ENCODE measurements at regions of chr1 and their contacts with region 1.

Region 1: DNA sequence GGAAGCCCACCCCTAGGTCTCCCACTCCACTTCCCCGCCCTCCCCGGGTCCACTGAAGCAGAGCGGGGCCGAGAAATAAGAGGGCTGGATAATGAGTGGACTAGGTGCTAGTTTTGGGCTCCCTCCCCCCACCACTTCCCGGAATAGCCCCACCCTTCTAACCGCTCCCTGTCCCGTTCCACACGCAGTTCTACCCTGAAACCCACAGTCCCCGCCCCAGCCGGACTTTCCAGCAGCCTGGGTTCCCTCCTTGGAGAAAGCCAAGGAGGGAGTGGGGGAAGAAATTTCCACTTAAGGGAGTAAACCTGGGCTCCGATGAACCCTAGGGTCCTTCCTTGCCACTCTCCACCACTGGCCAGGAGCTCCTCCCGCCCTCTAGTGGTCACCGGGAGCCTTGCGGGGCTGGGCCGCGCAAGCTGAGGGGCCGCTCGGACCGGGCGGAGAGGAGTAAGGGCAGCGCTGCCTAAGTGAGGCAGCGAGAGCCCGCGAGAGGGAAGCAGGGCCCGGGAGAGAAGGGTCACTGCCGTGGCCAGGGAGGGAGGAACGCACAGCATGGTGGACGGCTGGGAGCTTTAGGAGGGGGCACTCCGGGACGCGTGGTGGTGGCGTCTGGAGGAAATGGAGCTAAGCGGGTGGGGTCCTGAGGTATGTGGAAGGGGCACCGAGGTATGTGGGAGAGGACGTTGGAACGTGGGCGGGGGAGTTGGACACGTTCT is 14.3 kb downstream of the THBS3 start:
- DNase-seq: peak; percentile 82
- ATAC-seq: peak; percentile 49
- H3K4me3 Mint-ChIP-seq: peak overlapping the region; percentile 84
- H3K27ac Mint-ChIP-seq: peak overlapping the region; percentile 98
- H3K4me1 Mint-ChIP-seq: peaks cover 40% of the 10 kb centered on the region
- H3K27me3 Mint-ChIP-seq: no peaks in the 10 kb centered on the region

Region 2: DNA sequence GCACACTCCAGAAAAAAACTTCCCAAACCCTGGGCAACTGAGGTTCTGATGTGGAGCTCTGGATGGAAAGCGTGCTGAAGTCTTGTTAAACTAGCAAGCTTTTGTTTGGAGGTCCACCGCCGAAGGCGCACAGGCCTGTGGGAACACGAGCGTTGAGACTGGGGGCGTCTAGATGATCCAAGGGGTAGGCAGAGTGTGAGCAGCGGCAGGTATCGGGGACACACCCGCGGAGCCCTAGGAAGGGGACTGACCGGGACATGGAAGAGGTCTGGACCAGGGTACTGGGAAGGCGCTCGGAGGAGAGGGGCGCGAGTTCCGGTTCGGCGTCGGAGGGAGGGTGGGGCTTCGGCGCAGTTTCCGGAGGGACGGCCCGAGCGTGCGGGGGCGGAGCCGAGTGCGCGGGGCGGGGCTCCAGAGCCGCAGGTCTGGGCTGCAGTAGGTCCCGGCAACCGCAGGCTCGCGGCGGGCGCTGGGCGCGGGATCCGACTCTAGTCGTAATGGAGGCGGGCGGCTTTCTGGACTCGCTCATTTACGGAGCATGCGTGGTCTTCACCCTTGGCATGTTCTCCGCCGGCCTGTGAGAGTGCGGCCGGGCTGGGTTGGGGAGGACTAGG is 57.9 kb before region 1 on chr1 and contains the start of gene SLC50A1:
- CTCF ChIA-PET with region 1: interaction called, 17 read pairs
- POLR2A ChIA-PET with region 1: interaction called, 4 read pairs
- DNase-seq: peak; percentile 95
- ATAC-seq: peak; percentile 84
- H3K4me3 Mint-ChIP-seq: peak within 1 kb of the TSS; percentile 98
- H3K27ac Mint-ChIP-seq: peak within 1 kb of the TSS; percentile 99
- H3K4me1 Mint-ChIP-seq: peaks cover 47% of the 10 kb centered on the region
- H3K27me3 Mint-ChIP-seq: no peaks in the 10 kb centered on the region
- total RNA-seq, gene SLC50A1: 37.5 to 38.9 TPM

Region 3: GRCh38 chr1:155227261-155228095 is 34.0 kb after region 1 on chr1:
- CTCF ChIA-PET with region 1: interaction called, 25 read pairs
- POLR2A ChIA-PET with region 1: interaction called, 23 read pairs
- DNase-seq: peak; percentile 99
- ATAC-seq: peak; percentile 96
- H3K4me3 Mint-ChIP-seq: peak overlapping the region; percentile 91
- H3K27ac Mint-ChIP-seq: peak overlapping the region; percentile 94
- H3K4me1 Mint-ChIP-seq: peaks cover 33% of the 10 kb centered on the region
- H3K27me3 Mint-ChIP-seq: no peaks in the 10 kb centered on the region

Region 4: GRCh38 chr1:155553349-155553748 is 359.9 kb after region 1 on chr1:
- CTCF ChIA-PET with region 1: no interaction called
- POLR2A ChIA-PET with region 1: no interaction called
- DNase-seq: no peak
- ATAC-seq: no peak
- H3K4me3 Mint-ChIP-seq: no peak overlapping the region
- H3K27ac Mint-ChIP-seq: no peak overlapping the region
- H3K4me1 Mint-ChIP-seq: peaks cover 18% of the 10 kb centered on the region
- H3K27me3 Mint-ChIP-seq: no peaks in the 10 kb centered on the region

Region 5: GRCh38 chr1:155636397-155637153 is 443.1 kb after region 1 on chr1:
- CTCF ChIA-PET with region 1: no interaction called
- POLR2A ChIA-PET with region 1: no interaction called
- DNase-seq: no peak
- ATAC-seq: peak; percentile 29
- H3K4me3 Mint-ChIP-seq: peak overlapping the region; percentile 98
- H3K27ac Mint-ChIP-seq: peak overlapping the region; percentile 93
- H3K4me1 Mint-ChIP-seq: peaks cover 22% of the 10 kb centered on the region
- H3K27me3 Mint-ChIP-seq: no peaks in the 10 kb centered on the region